Right ventricle myocardium inferior (tissue), 1 donor: ENCODE measurements at regions of chr19 and their contacts with region 1.

Region 1: DNA sequence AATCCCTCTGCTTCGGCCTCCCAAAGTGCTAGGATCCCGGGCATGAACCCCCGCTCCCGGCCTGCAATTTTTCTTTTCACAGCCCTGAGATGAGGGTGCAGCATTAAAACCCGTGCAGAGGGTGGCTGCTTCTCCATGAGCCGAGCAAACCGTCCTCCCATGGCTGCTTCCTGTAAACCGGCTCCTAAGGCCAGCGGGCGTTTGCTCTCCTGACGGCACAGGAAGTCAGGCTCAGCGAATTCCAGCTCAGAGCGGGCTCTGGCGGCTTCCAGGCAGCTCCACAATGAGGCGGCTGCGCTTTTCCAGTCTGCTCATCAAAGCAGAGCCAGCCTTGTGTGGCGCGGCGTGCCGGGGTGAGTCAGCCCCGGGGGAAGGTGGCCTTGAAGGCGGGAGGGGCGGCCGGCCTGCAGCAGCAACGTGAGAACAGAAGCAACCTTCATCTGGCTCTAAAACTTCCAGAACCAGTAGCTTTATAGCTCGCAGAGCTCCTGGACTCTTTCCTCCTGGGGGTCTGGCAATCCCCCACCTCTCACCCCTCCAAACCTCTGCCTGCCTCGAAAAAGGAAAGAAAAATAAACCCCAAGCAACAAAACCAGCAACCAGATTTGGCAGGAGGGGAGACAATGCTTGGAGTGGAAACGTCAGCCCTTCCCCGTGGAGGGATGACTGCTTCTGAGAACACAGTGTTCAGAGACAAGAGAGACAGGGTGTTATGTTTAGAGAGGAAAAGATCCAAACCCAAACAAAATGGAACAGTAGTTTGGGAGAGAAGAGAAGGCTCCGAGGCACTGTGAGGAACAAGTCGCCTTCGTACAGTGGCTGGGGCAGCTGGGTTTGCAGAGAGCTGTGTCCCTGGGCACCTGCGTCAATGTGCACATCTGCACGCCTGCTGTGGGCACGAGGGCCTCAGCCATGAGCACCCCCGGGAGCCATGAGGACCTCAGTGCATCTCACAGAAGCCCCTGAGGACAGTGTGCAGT is 67.8 kb downstream of the GADD45B start:
- DNase-seq: peak; percentile 96
- ATAC-seq: peak; percentile 81

Region 2: DNA sequence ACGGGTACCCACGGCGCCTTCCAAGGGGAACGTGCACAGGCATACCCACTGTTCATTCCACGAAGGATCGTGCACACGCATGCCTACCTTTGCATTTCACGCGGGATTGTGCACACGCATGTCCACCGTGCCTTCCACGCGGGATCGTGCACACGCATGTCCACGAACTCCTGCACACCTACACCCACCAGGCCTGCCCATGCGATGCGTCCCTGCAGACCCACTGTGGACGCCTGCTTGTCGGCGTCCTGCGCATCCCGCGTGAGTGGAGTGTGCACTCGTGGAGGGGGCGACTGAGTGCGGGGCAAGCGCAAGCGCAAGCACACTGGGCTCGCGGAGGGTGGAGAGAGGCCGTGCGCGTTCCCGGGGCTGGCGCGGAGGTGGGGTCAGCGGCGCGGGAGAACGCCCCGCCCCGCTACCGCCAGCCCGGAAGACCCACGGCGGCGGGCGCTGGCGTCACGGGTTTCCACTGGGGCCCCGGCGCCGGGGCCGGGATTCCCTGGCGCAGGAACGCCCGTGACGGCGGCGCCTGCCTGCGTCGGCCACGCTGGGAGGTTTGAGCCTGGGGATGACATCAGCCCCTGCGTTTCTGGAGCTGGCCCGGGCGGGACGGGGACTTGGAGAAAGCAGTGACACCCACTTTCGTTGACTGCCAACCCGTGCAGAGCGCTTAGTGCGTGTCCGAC is 49.2 kb before region 1 on chr19:
- intact Hi-C with region 1: loop called (anchors 5 kb)
- DNase-seq: peak; percentile 88
- ATAC-seq: peak; percentile 80

Region 3: GRCh38 chr19:2602391-2603181 is 58.8 kb after region 1 on chr19:
- intact Hi-C with region 1: loop called (anchors 2 kb)
- DNase-seq: peak; percentile 93
- ATAC-seq: peak; percentile 92